ENCODE measurements at regions of chr20 and their contacts with region 1.

Region 1: DNA sequence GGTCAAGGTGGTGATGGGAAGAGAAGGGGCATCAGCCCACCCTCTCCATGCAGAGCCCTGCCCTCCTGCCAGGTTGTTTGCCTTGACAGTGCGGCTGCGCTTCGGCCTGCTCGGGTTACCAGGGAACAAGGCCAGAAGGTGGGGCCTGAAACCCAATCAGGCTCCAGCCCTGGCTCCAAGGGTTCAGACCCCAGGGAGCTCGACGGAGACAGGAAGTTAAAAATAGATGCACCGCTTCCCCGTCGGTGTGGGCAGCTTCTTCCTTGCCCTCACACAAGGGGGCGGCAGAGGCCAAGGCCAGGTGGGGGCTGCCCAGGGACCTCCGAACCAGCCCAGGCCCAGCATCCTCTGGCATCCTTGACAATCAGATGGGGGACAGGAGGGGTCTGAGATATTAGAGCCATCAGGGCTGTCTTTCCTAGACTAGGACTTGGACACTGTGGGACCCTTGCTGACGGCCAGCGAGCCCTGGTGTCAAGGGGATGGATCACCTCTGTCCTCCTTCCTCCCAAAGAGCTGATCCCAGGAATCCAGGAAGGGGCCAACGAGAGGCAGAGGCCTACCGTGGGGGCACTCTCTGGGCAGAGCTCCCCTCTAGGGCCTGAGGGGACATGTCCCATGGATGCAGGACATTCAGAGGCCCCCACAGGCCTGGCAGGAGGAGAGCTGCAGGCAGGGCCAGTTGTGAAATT is 65.2 kb downstream of the RIPOR3 start:
- DNase-seq: peak; percentile 71

Region 2: GRCh38 chr20:50645253-50646118 is 19.4 kb after region 1 on chr20:
- CTCF ChIA-PET with region 1: no interaction called
- POLR2A ChIA-PET with region 1: no interaction called
- DNase-seq: peak; percentile 28

Region 3: GRCh38 chr20:50744143-50744792 is 118.1 kb after region 1 on chr20:
- CTCF ChIA-PET with region 1: interaction called, 22 read pairs
- POLR2A ChIA-PET with region 1: no interaction called
- DNase-seq: peak; percentile 59

Region 4: GRCh38 chr20:50749758-50750046 is 123.6 kb after region 1 on chr20:
- CTCF ChIA-PET with region 1: interaction called, 22 read pairs
- POLR2A ChIA-PET with region 1: no interaction called
- DNase-seq: no peak

Region 5: GRCh38 chr20:50790651-50791277 is 164.6 kb after region 1 on chr20:
- CTCF ChIA-PET with region 1: interaction called, 13 read pairs
- POLR2A ChIA-PET with region 1: interaction called, 6 read pairs
- DNase-seq: peak; percentile 83

Measured in HEK293T (cell line).